ENCODE measurements at regions of chr6 and their contacts with region 1.

Region 1: GRCh38 chr6:119727504-119728217 is 378.1 kb upstream of the MAN1A1 start:
- DNase-seq: no peak
- H3K4me3 ChIP-seq: no peak overlapping the region
- CTCF ChIP-seq: no peak

Region 2: GRCh38 chr6:119713903-119714302 is 13.8 kb before region 1 on chr6:
- CTCF ChIA-PET with region 1: no interaction called
- POLR2A ChIA-PET with region 1: no interaction called
- DNase-seq: no peak
- H3K4me3 ChIP-seq: no peak overlapping the region
- CTCF ChIP-seq: no peak

Region 3: DNA sequence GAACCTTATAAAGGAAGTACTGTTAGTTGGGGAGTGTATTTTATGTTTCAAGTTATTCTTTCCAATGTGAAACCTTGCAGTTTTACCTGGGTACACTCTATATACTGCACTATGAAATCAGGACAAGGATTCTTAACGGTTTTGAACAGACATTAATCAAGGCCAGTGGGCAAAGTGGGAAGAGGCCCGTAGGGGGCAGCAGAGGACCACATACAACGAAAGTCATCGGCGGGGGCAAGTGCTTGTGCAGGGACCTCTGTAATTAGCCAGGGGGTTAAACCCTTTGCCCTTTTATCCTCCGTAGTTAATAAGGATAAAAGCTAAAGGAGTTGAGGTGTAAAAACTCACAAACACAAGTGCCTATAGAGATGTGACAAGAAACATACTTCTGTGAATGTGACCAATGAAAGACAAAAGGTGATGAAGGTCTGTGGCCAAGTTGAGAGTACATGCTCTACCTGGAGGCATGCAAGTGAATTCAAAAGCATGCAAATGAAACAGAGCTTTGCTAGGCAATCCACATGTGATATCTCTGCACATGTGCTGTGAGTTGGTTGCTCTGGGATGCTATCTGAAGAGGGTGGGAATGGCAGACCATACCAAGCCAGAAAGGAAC is 14.6 kb after region 1 on chr6:
- CTCF ChIA-PET with region 1: interaction called, 10 read pairs
- POLR2A ChIA-PET with region 1: no interaction called
- DNase-seq: no peak
- H3K4me3 ChIP-seq: no peak overlapping the region
- CTCF ChIP-seq: peak; percentile 69

Region 4: GRCh38 chr6:120010075-120010474 is 282.4 kb after region 1 on chr6:
- CTCF ChIA-PET with region 1: no interaction called
- POLR2A ChIA-PET with region 1: no interaction called
- DNase-seq: no peak
- H3K4me3 ChIP-seq: no peak overlapping the region
- CTCF ChIP-seq: no peak

Measured in AG04449 (cell line).